PC-9 (cell line): ENCODE measurements at regions of chr12 and their contacts with region 1.

Region 1: GRCh38 chr12:56510786-56511185 is 10.8 kb upstream of the RBMS2 start:
- DNase-seq: no peak
- H3K4me3 ChIP-seq: no peak overlapping the region
- H3K27ac ChIP-seq: no peak overlapping the region
- H3K4me1 ChIP-seq: no peaks in the 10 kb centered on the region
- H3K27me3 ChIP-seq: no peaks in the 10 kb centered on the region
- CTCF ChIP-seq: no peak

Region 2: GRCh38 chr12:56541631-56542030 is 30.8 kb after region 1 on chr12:
- CTCF ChIA-PET with region 1: interaction called, 3 read pairs
- POLR2A ChIA-PET with region 1: no interaction called
- intact Hi-C with region 1: loop called (anchors 1 kb)
- DNase-seq: no peak
- H3K4me3 ChIP-seq: no peak overlapping the region
- H3K27ac ChIP-seq: no peak overlapping the region
- H3K4me1 ChIP-seq: peaks cover 11% of the 10 kb centered on the region
- H3K27me3 ChIP-seq: no peaks in the 10 kb centered on the region
- CTCF ChIP-seq: no peak